RWPE1 (cell line): ENCODE measurements at regions of chr15 and their contacts with region 1.

Region 1: GRCh38 chr15:74835307-74835823 is 7.6 kb downstream of the ULK3 start:
- DNase-seq: peak; percentile 85
- H3K27ac ChIP-seq: peak overlapping the region; percentile 34
- CTCF ChIP-seq: peak; percentile 78

Region 2: GRCh38 chr15:74816808-74817674 is 18.3 kb before region 1 on chr15:
- CTCF ChIA-PET with region 1: interaction called, 13 read pairs
- POLR2A ChIA-PET with region 1: interaction called, 10 read pairs
- DNase-seq: peak; percentile 76
- H3K27ac ChIP-seq: peak overlapping the region; percentile 84
- CTCF ChIP-seq: peak; percentile 68